ENCODE measurements at regions of chr13 and their contacts with region 1.

Region 1: GRCh38 chr13:27792393-27793218 is at the start of gene GSX1:
- DNase-seq: peak; percentile 36
- H3K4me3 Mint-ChIP-seq: peak within 1 kb of the TSS; percentile 59
- H3K27ac Mint-ChIP-seq: no peak within 1 kb of the TSS
- H3K4me1 Mint-ChIP-seq: peaks cover 19% of the 10 kb centered on the region
- H3K27me3 Mint-ChIP-seq: peaks cover 73% of the 10 kb centered on the region
- total RNA-seq, gene GSX1: not detected in 2 replicates

Region 2: DNA sequence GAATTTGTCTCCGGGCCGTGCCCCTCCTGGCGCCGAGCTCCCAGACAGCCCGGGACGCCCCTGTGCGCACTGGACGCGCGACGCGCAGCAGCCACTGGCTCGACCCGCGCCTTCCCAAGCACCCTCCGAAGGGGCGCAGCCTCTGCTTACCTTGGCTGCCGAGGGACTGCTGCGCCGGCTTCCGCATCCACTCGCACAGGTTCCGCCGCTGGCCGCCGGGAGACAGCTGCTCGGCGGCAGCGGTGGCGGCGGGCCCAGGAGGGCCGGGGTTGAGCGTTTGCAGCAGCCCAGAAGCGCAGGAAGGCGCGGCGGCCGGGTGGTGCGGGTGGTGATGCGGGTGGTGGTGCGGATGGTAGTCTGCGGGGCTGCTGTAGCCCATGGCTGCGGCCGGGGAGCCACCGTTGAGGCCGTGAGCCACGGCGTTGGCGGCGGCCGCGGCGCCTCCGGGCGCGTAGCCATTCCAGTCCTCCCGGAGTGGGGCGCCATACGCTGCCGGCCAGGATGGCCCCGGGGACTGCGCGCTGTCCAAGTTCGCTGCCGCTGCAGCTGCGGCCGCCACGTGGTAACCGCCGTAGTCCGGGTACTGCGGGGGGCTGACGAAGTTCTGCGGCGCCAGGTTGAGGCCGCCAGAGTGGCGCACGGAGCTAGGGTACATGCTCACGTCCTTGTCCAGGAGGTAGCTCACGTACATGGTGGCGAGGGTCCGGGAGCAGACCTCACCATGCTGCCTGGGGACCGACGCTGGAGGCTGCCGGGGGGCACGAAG is 175.9 kb after region 1 on chr13:
- intact Hi-C with region 1: loop called (anchors 2 kb)
- DNase-seq: no peak
- H3K4me3 Mint-ChIP-seq: no peak overlapping the region
- H3K27ac Mint-ChIP-seq: no peak overlapping the region
- H3K4me1 Mint-ChIP-seq: no peaks in the 10 kb centered on the region
- H3K27me3 Mint-ChIP-seq: peaks cover 81% of the 10 kb centered on the region

Region 3: DNA sequence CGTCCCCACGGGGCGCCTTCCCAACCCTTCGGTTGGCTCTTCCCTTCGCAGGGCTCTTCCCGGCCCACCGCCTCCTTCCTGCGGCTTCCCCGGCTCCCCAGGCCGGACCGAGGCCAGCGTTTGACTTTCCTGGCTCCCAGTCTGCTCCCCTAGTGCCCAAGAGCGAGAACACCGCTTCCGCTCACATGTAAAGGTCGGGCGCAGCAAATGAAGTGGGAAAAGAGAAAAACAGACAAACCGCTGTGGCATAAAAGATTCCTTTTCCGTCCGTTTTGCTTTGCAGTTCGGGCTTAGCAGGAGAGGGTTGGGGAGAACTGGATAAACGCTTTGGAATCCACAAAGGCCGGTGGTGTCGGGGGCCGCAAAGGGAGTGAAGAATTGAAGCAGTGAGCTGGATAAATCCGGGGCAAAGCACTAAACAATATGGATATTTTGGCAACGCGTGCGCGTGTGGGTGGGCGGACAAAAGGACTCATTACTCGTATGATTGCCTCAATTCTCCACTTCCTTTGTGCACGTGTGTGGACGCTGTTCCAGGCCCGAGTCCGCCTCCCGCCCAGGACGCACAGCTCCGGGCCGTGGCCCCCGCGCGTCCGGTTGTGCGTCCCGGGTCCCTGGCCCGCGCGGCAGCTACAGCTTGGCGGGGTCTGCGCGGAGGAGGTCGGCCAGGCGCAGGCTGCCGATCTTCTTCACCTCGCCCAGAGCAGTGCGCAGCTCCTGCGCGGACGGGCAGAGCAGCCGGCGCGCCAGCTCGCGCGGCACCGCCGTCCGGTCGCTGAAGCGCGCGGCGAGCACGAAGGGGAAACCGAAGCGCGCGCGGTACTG is 185.1 kb after region 1 on chr13:
- intact Hi-C with region 1: loop called (anchors 2 kb)
- DNase-seq: no peak
- H3K4me3 Mint-ChIP-seq: no peak overlapping the region
- H3K27ac Mint-ChIP-seq: peak overlapping the region; percentile 74
- H3K4me1 Mint-ChIP-seq: peaks cover 5% of the 10 kb centered on the region
- H3K27me3 Mint-ChIP-seq: peaks cover 81% of the 10 kb centered on the region